Naive thymus-derived CD4-positive, alpha-beta T cell (primary cell): ENCODE measurements at regions of chr17 and their contacts with region 1.

Region 1: GRCh38 chr17:63425482-63425881 is 20.6 kb downstream of the CYB561 start:
- DNase-seq: peak; percentile 31 to 74 (median 62)
- ATAC-seq: peak; percentile 91
- H3K4me3 ChIP-seq: no peak overlapping the region
- H3K4me3 Mint-ChIP-seq: peak overlapping the region in 4 of 10 donors; percentile 19 to 67 (median 32)
- H3K27ac ChIP-seq: no peak overlapping the region
- H3K27ac Mint-ChIP-seq: peak overlapping the region in 1 of 9 donors; percentile 41
- H3K4me1 ChIP-seq: peaks cover 22 to 26% of the 10 kb centered on the region in 2 donors
- H3K4me1 Mint-ChIP-seq: peaks cover 20 to 39% (median 28%) of the 10 kb centered on the region in 7 donors
- H3K27me3 ChIP-seq: no peaks in the 10 kb centered on the region
- H3K27me3 Mint-ChIP-seq: peaks cover 0 to 22% (median 0%) of the 10 kb centered on the region in 5 donors

Region 2: GRCh38 chr17:63478791-63479494 is 53.5 kb after region 1 on chr17:
- CTCF ChIA-PET with region 1: interaction called, 58 read pairs
- POLR2A ChIA-PET with region 1: interaction called, 3 read pairs
- intact Hi-C with region 1: loop called in 1 of 2 experiments (anchors 1 kb)
- DNase-seq: peak; percentile 41 to 75 (median 59)
- ATAC-seq: peak; percentile 84
- H3K4me3 ChIP-seq: no peak overlapping the region
- H3K4me3 Mint-ChIP-seq: peak overlapping the region in 9 of 10 donors; percentile 13 to 67 (median 49)
- H3K27ac ChIP-seq: no peak overlapping the region
- H3K27ac Mint-ChIP-seq: no peak overlapping the region
- H3K4me1 ChIP-seq: peaks cover 5 to 14% of the 10 kb centered on the region in 2 donors
- H3K4me1 Mint-ChIP-seq: peaks cover 0 to 18% (median 8%) of the 10 kb centered on the region in 7 donors
- H3K27me3 ChIP-seq: peaks cover 0 to 12% of the 10 kb centered on the region in 2 donors
- H3K27me3 Mint-ChIP-seq: peaks cover 13 to 44% (median 23%) of the 10 kb centered on the region in 5 donors

Region 3: GRCh38 chr17:63611354-63611753 is 185.9 kb after region 1 on chr17:
- CTCF ChIA-PET with region 1: interaction called, 112 read pairs
- POLR2A ChIA-PET with region 1: interaction called, 11 read pairs
- intact Hi-C with region 1: loop called (anchors 1 kb)
- DNase-seq: peak in 5 of 9 donors; percentile 3 to 57 (median 25)
- ATAC-seq: peak; percentile 47
- H3K4me3 ChIP-seq: no peak overlapping the region
- H3K4me3 Mint-ChIP-seq: peak overlapping the region in 9 of 10 donors; percentile 10 to 74 (median 58)
- H3K27ac ChIP-seq: peak overlapping the region; percentile 52
- H3K27ac Mint-ChIP-seq: peak overlapping the region; percentile 85 to 98 (median 93)
- H3K4me1 ChIP-seq: peaks cover 25 to 28% of the 10 kb centered on the region in 2 donors
- H3K4me1 Mint-ChIP-seq: peaks cover 22 to 30% (median 29%) of the 10 kb centered on the region in 7 donors
- H3K27me3 ChIP-seq: no peaks in the 10 kb centered on the region
- H3K27me3 Mint-ChIP-seq: no peaks in the 10 kb centered on the region

Region 4: GRCh38 chr17:63714547-63715277 is 289.2 kb after region 1 on chr17:
- CTCF ChIA-PET with region 1: interaction called, 7 read pairs
- POLR2A ChIA-PET with region 1: interaction called, 6 read pairs
- intact Hi-C with region 1: loop called (anchors 1 to 5 kb)
- DNase-seq: no peak
- ATAC-seq: no peak
- H3K4me3 ChIP-seq: no peak overlapping the region
- H3K4me3 Mint-ChIP-seq: no peak overlapping the region
- H3K27ac ChIP-seq: no peak overlapping the region
- H3K27ac Mint-ChIP-seq: peak overlapping the region in 3 of 9 donors; percentile 41 to 76 (median 62)
- H3K4me1 ChIP-seq: peaks cover 4 to 11% of the 10 kb centered on the region in 2 donors
- H3K4me1 Mint-ChIP-seq: peaks cover 7 to 21% (median 15%) of the 10 kb centered on the region in 7 donors
- H3K27me3 ChIP-seq: no peaks in the 10 kb centered on the region
- H3K27me3 Mint-ChIP-seq: no peaks in the 10 kb centered on the region

Region 5: DNA sequence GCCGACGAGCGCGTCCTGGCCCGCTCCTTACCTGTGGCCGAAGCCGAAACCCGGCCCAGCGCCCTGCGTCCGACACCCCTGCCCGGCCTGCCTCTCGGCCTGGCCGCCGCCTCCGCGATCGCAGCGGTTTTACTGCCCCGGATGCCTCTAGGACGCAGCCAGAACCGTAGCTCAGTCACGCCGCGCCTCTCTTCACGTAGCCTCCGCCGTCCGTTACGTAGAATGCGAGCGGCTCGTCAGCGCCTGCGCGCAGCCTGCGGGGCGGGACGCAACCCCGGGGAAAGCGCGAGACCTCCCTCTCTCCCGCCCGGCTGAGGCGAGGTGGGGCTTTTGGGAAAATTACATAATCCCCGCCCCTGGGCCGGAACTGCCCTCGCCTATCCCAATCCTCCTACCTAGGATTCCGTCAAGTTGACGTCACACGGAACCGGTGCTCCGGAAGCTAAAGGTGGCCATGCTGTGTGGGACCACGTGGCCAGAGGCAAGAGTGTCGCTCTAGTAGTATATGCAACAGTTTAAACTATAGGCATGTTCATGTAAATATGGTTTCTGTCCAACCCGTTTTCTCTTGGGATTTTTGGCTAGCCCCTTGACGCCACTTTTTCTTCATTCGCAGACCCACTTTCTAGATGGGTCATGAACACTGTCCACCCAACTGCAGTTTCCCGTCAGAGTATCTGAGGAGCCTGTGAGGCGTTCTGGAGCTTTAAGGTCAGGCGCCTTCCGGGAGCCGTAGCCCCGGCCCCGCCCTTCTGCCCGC is 348.1 kb after region 1 on chr17 and contains the start of gene CCDC47:
- CTCF ChIA-PET with region 1: no interaction called
- POLR2A ChIA-PET with region 1: no interaction called
- intact Hi-C with region 1: loop called in 1 of 2 experiments (anchors 10 kb)
- DNase-seq: peak; percentile 92 to 99 (median 99)
- ATAC-seq: peak; percentile 88
- H3K4me3 ChIP-seq: peak within 1 kb of the TSS; percentile 85
- H3K4me3 Mint-ChIP-seq: peak within 1 kb of the TSS; percentile 91 to 99 (median 98)
- H3K27ac ChIP-seq: peak within 1 kb of the TSS; percentile 100
- H3K27ac Mint-ChIP-seq: peak within 1 kb of the TSS; percentile 97 to 100 (median 99)
- H3K4me1 ChIP-seq: peaks cover 21 to 46% of the 10 kb centered on the region in 2 donors
- H3K4me1 Mint-ChIP-seq: peaks cover 31 to 84% (median 62%) of the 10 kb centered on the region in 7 donors
- H3K27me3 ChIP-seq: no peaks in the 10 kb centered on the region
- H3K27me3 Mint-ChIP-seq: peaks cover 0 to 7% (median 0%) of the 10 kb centered on the region in 5 donors
- total RNA-seq, gene CCDC47: 31.8 to 62.9 (median 34.7) TPM

Region 6: DNA sequence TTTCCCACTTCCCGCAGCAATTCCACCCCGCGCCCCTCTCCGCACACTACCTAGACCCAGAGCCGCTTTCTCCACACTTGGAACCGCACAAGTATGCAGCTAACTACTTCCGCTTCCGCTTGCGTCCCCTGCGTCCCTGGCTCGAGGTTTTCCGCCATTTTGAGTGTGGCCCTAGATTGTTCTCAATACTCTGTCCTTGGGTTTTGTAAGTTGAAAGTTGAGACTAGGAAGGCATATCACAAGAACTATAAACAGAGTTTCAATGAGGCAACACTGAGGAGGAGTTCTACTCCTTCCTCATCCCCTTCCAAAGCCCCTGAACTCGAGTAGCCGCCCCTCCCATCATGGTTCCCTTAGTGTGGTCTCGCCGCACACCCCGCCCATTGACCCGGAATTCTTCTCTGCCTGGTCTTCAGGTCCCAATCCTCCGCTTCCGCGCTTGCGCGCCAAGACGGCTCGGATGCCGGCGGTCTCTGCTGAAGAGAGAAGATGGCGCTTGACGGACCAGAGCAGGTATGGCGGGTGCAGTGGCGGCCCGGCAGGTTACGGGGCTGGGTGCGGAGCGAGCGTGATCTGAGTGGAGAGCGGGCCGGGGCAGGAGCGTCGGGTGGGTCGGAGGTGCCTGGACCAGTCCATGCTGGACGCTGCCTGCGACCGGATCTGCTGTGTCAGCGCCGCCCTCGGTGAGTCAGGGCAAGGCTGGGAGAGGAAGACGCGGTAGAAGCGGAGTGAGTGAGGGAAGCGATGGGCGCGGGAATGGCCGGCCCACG is 401.7 kb after region 1 on chr17 and contains the starts of genes FTSJ3 and PSMC5:
- CTCF ChIA-PET with region 1: interaction called, 3 read pairs
- POLR2A ChIA-PET with region 1: no interaction called
- intact Hi-C with region 1: loop called in 1 of 2 experiments (anchors 5 kb)
- DNase-seq: peak; percentile 89 to 98 (median 96)
- ATAC-seq: peak; percentile 97
- H3K4me3 ChIP-seq: peak within 1 kb of the TSS; percentile 89
- H3K4me3 Mint-ChIP-seq: peak within 1 kb of the TSS; percentile 93 to 100 (median 98)
- H3K27ac ChIP-seq: peak within 1 kb of the TSS; percentile 87
- H3K27ac Mint-ChIP-seq: peak within 1 kb of the TSS; percentile 98 to 100 (median 99)
- H3K4me1 ChIP-seq: peaks cover 27 to 46% of the 10 kb centered on the region in 2 donors
- H3K4me1 Mint-ChIP-seq: peaks cover 43 to 82% (median 77%) of the 10 kb centered on the region in 7 donors
- H3K27me3 ChIP-seq: no peaks in the 10 kb centered on the region
- H3K27me3 Mint-ChIP-seq: no peaks in the 10 kb centered on the region
- total RNA-seq, gene FTSJ3: 38.1 to 66.2 (median 55.8) TPM
- total RNA-seq, gene PSMC5: 68.4 to 153 (median 105) TPM

Region 7: DNA sequence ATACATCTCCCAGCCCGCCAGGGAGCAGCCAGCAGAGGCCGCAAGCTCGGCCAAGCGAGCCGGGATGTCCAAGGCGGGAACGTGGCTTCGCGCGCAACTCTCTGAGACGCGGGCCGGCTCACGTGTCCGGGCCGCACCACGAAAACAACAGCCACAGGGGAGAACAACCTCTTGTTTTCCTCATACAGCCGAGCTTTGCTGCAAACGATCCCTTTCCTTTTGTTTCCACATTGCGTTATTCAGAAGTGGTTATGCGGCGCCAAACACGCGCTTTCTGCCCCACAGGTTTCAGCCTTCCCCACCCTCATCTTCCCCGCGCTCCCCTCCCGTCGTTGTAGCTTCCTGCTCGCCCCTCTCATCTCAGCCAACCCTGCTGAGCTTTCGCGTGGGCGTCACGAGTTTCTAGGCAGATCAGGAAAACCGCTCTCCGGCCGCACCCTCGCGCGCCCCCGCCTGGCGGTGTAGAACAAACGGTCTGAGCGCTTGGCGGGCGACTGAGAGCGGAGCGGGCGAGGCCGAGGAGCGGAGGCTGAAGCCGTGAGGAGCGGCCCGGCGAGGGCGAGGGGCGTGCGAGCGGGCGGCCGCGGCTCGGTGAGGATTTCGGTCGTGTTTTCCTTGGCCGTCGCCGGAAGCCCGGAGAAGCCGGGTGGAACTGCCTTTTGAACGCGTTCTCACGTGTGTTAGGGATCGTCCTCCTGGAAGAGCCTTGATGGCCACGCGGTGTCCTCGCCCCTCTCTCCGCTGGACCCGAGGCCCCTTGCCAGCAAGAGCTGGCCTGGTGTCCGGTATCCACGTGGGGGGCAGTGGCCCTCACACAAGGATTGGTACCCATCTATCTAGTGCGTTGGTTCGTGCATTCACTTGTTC is 423.6 kb after region 1 on chr17:
- CTCF ChIA-PET with region 1: no interaction called
- POLR2A ChIA-PET with region 1: no interaction called
- intact Hi-C with region 1: loop called in 1 of 2 experiments (anchors 5 kb)
- DNase-seq: peak; percentile 88 to 96 (median 94)
- ATAC-seq: peak; percentile 99
- H3K4me3 ChIP-seq: peak overlapping the region; percentile 57
- H3K4me3 Mint-ChIP-seq: peak overlapping the region; percentile 81 to 90 (median 87)
- H3K27ac ChIP-seq: peak overlapping the region; percentile 61
- H3K27ac Mint-ChIP-seq: peak overlapping the region; percentile 86 to 99 (median 93)
- H3K4me1 ChIP-seq: peaks cover 0 to 9% of the 10 kb centered on the region in 2 donors
- H3K4me1 Mint-ChIP-seq: peaks cover 11 to 27% (median 24%) of the 10 kb centered on the region in 7 donors
- H3K27me3 ChIP-seq: no peaks in the 10 kb centered on the region
- H3K27me3 Mint-ChIP-seq: peaks cover 0 to 25% (median 0%) of the 10 kb centered on the region in 5 donors